Left ventricle myocardium superior (tissue), 1 donor: ENCODE measurements at regions of chr16 and their contacts with region 1.

Region 1: GRCh38 chr16:48632137-48632774 is 22.3 kb upstream of the N4BP1 start:
- DNase-seq: no peak
- ATAC-seq: no peak

Region 2: DNA sequence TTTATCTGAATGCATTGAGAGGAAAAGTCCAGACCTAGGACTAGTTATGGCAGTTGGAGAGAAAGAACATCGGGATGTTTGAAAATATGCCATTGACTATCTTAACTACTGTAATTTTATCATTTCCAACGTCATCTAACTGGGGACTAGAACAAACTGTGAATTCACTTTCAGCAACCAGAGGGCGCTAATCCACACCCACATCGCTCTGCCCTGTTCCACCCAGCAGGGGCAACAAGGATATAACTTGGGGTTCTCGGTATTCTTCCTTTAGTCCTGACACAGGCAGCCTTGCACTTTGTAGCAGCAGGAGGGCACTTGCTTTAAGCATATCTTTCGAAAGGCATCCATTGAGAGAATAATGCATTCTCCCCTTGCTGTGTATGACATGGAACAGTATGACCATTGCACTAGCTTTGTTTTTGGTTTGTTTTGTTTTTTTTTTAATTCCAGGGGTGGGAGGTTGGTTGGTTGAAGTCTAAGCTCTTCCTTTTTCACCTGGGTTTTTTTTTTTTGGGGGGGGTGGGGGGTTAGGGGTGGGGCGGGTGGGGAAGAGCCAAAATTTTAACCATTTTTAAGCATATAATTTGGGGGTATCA is 278.6 kb before region 1 on chr16:
- intact Hi-C with region 1: loop called (anchors 5 kb)
- DNase-seq: no peak
- ATAC-seq: peak; percentile 80

Region 3: GRCh38 chr16:48546774-48547173 is 85.5 kb before region 1 on chr16:
- intact Hi-C with region 1: no loop called
- DNase-seq: no peak
- ATAC-seq: peak; percentile 80

Region 4: DNA sequence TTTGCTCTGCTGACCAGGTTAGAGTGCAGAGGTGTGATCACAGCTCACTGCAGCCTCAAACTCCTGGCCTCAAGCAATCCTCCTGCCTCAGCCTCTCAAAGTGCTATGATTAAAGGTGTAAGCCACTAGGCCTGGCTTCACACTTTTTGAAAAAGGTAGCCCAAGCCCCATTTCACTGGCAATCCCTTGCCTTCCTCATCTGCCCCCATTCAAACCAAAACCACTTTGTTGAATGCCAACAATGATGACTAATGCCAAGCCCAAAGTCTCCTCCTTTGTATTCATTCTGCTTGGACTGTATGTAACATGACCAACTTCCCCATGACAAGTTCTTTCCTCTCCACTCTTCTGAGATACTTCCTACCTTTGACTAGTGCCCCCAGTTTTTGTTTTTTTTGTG is 55.3 kb before region 1 on chr16:
- intact Hi-C with region 1: no loop called
- DNase-seq: no peak
- ATAC-seq: no peak

Region 5: DNA sequence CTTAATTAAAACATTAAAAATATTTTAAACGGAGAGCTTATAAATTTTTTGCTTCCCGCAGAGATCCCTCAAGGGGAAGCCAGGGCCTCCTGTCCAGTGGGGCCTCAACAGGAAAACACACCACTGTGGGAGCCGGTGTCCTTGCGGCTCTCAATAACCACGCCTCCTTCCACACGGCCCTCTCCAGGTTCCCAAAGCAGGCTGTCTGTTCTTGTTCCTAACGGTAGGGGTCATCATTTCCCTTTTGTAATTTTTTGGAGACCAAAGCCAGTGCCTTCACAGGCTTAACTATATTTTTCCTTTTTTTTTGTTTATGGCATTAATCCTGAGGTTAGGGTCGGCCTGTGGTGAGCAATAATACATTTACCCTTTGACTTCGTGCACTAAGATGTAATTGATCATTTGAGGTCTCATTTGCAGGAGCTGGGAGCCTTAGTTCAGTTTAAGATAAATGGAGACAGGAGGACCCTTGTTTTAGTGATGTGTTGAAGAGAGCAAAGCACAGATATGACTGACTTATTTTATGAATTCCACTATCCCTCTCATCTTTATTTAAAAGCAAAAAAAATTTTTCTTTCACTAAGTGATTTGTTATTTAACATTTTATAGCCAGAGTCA is 55.3 kb after region 1 on chr16:
- intact Hi-C with region 1: no loop called
- DNase-seq: peak; percentile 53
- ATAC-seq: peak; percentile 79